Activated T-helper 2 cell treated with anti-CD3 and anti-CD28 coated beads, Interferon-gamma antibody, Interleukin-2, Interleukin-4, amounts not matched to agents 10 μg/mL and 5 μg/mL and 100 μg/mL, durations not matched to agents 14 hours and 24 hours and 36 hours (primary cell): ENCODE measurements at regions of chr1 and their contacts with region 1.

Region 1: DNA sequence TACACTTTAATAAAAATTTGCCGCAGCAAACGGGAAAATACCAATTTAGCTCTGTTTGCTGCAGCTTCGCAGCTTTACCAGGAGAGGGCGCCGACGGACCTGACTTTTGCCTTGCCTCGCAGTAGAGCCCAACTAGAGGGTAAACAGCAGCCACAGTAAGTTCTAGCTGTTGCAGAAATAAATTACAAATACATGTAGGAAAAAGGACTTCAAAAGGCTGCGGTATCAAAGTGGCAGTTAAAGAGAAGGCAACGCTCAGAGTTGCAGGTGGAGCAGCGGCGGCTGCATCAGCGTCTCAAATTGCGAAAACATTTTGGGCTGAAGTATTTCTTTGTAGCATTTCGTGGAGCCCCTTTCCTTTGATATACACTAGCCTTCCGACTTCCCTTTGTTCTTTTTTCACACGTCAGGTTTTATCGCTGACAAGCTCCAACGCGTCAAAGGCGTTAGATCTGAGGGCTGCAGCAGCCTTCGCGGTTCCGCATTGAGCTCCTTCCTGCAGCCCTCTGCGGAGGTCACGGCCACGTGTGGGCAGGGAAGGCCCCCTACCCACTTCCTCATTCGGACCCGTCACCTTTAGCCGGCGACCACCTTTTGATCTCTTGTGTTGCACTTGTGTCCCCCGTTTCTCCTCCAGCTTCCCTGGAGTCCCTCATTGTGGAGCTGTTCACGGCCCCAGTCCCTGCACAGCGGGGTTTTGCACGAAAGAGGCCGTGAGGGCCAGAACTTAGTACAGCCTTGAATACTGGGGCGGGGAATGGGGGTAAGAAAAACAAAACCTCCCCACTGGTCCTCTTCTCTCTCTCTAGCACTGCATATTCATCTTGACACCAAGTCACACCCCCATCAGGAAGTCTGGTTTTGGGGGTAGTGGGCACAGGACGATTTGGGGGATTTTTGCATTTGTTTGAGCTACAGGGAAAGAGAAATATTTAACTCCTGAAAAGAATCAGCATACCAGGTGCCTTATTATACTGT is 72.8 kb downstream of the S1PR1 start:
- DNase-seq: peak; percentile 58
- H3K4me3 Mint-ChIP-seq: peak overlapping the region; percentile 71
- H3K27ac Mint-ChIP-seq: peak overlapping the region; percentile 77
- H3K4me1 Mint-ChIP-seq: peaks cover 51% of the 10 kb centered on the region
- H3K27me3 Mint-ChIP-seq: peaks cover 14% of the 10 kb centered on the region

Region 2: GRCh38 chr1:101293461-101294051 is 16.1 kb before region 1 on chr1:
- intact Hi-C with region 1: loop called (anchors 1 kb)
- DNase-seq: no peak
- H3K4me3 Mint-ChIP-seq: no peak overlapping the region
- H3K27ac Mint-ChIP-seq: peak overlapping the region; percentile 72
- H3K4me1 Mint-ChIP-seq: peaks cover 55% of the 10 kb centered on the region
- H3K27me3 Mint-ChIP-seq: peaks cover 24% of the 10 kb centered on the region

Region 3: GRCh38 chr1:101357444-101357986 is 47.9 kb after region 1 on chr1:
- intact Hi-C with region 1: loop called (anchors 1 kb)
- DNase-seq: peak; percentile 66
- H3K4me3 Mint-ChIP-seq: no peak overlapping the region
- H3K27ac Mint-ChIP-seq: no peak overlapping the region
- H3K4me1 Mint-ChIP-seq: peaks cover 13% of the 10 kb centered on the region
- H3K27me3 Mint-ChIP-seq: peaks cover 52% of the 10 kb centered on the region

Region 4: DNA sequence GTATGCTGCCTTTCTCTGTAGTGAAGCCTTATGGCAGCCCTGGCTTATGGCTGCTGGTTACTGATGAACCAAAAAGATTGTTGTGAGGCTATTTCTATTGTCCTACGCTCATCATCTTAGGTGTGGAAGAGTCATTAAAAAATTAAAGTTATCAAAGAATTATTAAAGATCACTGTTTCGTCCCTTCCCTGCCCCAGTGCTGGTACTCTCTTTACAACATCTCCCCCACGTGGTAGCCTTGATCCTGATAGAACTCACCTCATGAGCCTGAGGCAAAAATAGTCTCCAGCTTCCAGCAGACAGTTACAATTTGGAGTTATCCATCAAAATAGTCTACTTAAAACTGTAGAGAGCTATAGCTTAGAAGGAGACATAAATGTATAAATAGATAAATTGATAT is 128.7 kb after region 1 on chr1:
- intact Hi-C with region 1: loop called (anchors 1 kb)
- DNase-seq: no peak
- H3K4me3 Mint-ChIP-seq: no peak overlapping the region
- H3K27ac Mint-ChIP-seq: no peak overlapping the region
- H3K4me1 Mint-ChIP-seq: peaks cover 5% of the 10 kb centered on the region
- H3K27me3 Mint-ChIP-seq: peaks cover 40% of the 10 kb centered on the region

Region 5: GRCh38 chr1:101451888-101452287 is 142.3 kb after region 1 on chr1:
- intact Hi-C with region 1: loop called (anchors 1 kb)
- DNase-seq: no peak
- H3K4me3 Mint-ChIP-seq: no peak overlapping the region
- H3K27ac Mint-ChIP-seq: no peak overlapping the region
- H3K4me1 Mint-ChIP-seq: peaks cover 33% of the 10 kb centered on the region
- H3K27me3 Mint-ChIP-seq: peaks cover 26% of the 10 kb centered on the region

Region 6: GRCh38 chr1:101567582-101568189 is 258.1 kb after region 1 on chr1:
- intact Hi-C with region 1: loop called (anchors 5 kb)
- DNase-seq: peak; percentile 21
- H3K4me3 Mint-ChIP-seq: no peak overlapping the region
- H3K27ac Mint-ChIP-seq: no peak overlapping the region
- H3K4me1 Mint-ChIP-seq: no peaks in the 10 kb centered on the region
- H3K27me3 Mint-ChIP-seq: peaks cover 14% of the 10 kb centered on the region